Heart left ventricle (tissue), 16 donors: ENCODE measurements at regions of chr19 and their contacts with region 1.

Region 1: GRCh38 chr19:39125554-39126311 is at the start of gene PAK4:
- DNase-seq: peak; percentile 98
- ATAC-seq: peak; percentile 99 to 100 (median 100)
- H3K4me3 ChIP-seq: peak within 1 kb of the TSS; percentile 55 to 88 (median 78)
- H3K27ac ChIP-seq: peak within 1 kb of the TSS; percentile 41 to 86 (median 78)
- H3K4me1 ChIP-seq: peaks cover 0 to 59% (median 35%) of the 10 kb centered on the region in 12 donors
- H3K27me3 ChIP-seq: peaks cover 0 to 11% (median 0%) of the 10 kb centered on the region in 9 donors
- CTCF ChIP-seq: no peak
- POLR2A ChIP-seq: peak in 1 of 2 donors; percentile 61
- total RNA-seq, gene PAK4: 11.5 to 22.1 (median 16.2) TPM

Region 2: GRCh38 chr19:38618590-38619360 is 507.0 kb before region 1 on chr19 and contains the start of gene EIF3K:
- intact Hi-C with region 1: loop called in 1 of 10 experiments (anchors 10 kb)
- DNase-seq: peak; percentile 98 to 100 (median 99)
- ATAC-seq: peak; percentile 93 to 97 (median 95)
- H3K4me3 ChIP-seq: peak within 1 kb of the TSS; percentile 54 to 98 (median 84)
- H3K27ac ChIP-seq: peak within 1 kb of the TSS; percentile 81 to 96 (median 90)
- H3K4me1 ChIP-seq: peaks cover 2 to 28% (median 20%) of the 10 kb centered on the region in 12 donors
- H3K27me3 ChIP-seq: no peaks in the 10 kb centered on the region
- CTCF ChIP-seq: no peak
- POLR2A ChIP-seq: peak; percentile 51 to 80
- total RNA-seq, gene EIF3K: 447 to 1,239 (median 596) TPM

Region 3: DNA sequence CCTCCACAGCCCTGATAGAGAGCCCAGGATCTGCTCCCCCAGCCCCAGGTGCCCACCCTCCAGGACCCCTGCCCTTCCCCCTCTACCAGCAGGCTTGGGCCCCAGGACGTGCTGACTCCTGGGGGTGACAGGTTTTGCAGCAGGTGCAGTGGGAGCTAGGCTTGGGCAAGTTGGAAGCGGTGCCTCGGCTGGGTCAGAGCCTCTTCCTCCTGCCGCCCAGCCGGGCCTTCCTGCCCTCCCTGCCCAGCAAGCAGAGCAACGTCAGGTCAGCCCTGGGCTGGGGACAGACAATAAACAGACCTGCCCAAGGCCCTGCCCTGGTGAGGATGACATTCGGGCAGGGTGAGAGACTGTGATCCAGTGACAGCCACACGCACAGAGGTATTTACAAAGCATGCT is 61.8 kb after region 1 on chr19:
- intact Hi-C with region 1: loop called (anchors 1 to 10 kb)
- DNase-seq: no peak
- ATAC-seq: peak in 3 of 4 donors; percentile 43 to 68 (median 65)
- H3K4me3 ChIP-seq: no peak overlapping the region
- H3K27ac ChIP-seq: no peak overlapping the region
- H3K4me1 ChIP-seq: peaks cover 0 to 5% (median 0%) of the 10 kb centered on the region in 12 donors
- H3K27me3 ChIP-seq: peaks cover 0 to 28% (median 7%) of the 10 kb centered on the region in 9 donors
- CTCF ChIP-seq: no peak
- POLR2A ChIP-seq: no peak

Region 4: GRCh38 chr19:39341719-39342604 is 216.2 kb after region 1 on chr19 and contains the start of gene SAMD4B:
- intact Hi-C with region 1: loop called in 1 of 10 experiments (anchors 5 kb)
- DNase-seq: peak; percentile 99 to 100 (median 99)
- ATAC-seq: peak; percentile 96 to 97 (median 97)
- H3K4me3 ChIP-seq: peak within 1 kb of the TSS; percentile 71 to 96 (median 86)
- H3K27ac ChIP-seq: peak within 1 kb of the TSS in 11 of 12 donors; percentile 80 to 93 (median 90)
- H3K4me1 ChIP-seq: peaks cover 0 to 58% (median 31%) of the 10 kb centered on the region in 12 donors
- H3K27me3 ChIP-seq: no peaks in the 10 kb centered on the region
- CTCF ChIP-seq: peak; percentile 75 to 97 (median 88)
- POLR2A ChIP-seq: peak; percentile 25 to 90
- total RNA-seq, gene SAMD4B: 34.9 to 101 (median 52.3) TPM

Region 5: DNA sequence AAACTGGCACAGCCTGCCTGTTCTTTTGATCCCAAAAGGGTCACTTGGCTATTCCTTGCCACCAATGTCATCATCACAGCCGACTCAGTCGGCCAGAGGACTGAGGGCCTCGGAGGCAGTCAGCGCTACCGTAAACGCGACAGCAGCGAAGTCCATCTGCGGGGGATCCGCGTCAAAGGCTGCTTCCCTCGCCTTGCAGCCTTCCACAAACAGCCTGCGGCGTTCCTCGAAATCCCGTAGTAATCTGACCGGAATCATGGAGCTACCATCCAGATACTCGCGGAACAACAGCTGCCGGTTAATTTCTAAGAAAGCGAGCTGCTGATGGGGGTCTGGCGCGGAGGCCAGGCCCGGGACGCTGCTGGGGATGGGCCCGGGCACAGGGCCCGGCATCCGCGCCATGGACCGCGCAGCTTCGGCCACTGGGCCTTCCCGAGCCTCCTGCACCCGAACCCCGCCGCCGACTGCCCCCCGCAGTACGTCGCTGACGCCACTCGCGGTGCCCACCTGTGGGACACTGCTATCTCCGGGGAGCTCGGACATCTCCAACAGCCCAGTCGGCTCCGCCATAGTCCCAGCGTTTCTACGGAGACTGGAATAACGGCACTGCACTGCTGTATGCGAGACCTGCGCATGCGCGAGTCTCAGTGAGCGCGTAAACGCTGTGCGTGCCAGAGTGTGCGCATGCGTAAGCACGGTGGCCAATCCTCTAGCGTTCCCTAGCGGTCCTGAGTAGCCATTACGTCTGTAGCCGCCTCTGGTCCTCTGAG is 406.7 kb after region 1 on chr19 and contains the start of gene EID2B:
- intact Hi-C with region 1: loop called in 4 of 10 experiments (anchors 10 kb)
- DNase-seq: peak; percentile 95 to 98 (median 97)
- ATAC-seq: peak; percentile 93 to 99 (median 98)
- H3K4me3 ChIP-seq: peak within 1 kb of the TSS; percentile 58 to 98 (median 80)
- H3K27ac ChIP-seq: peak within 1 kb of the TSS; percentile 45 to 92 (median 82)
- H3K4me1 ChIP-seq: peaks cover 0 to 22% (median 13%) of the 10 kb centered on the region in 12 donors
- H3K27me3 ChIP-seq: no peaks in the 10 kb centered on the region
- CTCF ChIP-seq: peak; percentile 96 to 99 (median 98)
- POLR2A ChIP-seq: peak in 1 of 2 donors; percentile 78
- total RNA-seq, gene EID2B: 1.1 to 5.1 (median 2.9) TPM

Region 6: DNA sequence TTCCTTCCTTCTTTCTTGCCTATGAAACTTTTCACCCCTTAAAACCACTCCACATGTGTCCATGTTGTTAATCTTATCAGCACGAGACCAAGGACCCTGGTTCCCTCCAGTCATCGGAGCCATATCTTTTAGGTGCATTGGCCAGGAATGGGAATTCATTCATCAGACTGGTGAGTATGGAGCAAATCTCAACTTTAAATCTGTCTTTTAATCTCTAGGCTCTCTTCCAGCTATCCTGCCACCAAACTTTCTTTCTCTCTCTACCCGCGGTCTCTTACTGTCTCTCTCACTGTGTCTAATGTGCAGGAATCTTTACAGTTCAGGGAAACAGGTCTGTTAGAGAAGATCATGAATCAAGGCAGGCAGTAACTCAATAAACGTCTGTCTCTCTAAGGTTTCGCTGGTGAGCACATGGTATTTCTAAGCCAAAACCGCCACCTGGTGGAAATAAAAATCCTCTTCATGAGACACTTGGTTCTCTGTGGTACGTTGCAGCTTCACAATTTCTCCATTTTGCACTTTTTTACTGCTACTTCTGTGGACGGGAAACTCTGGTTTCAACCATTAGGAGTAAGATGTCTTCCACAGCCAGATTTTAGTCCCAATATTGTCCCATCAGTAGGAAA is 546.1 kb after region 1 on chr19:
- intact Hi-C with region 1: loop called in 1 of 10 experiments (anchors 5 kb)
- DNase-seq: no peak
- ATAC-seq: peak in 3 of 4 donors; percentile 57 to 62 (median 61)
- H3K4me3 ChIP-seq: no peak overlapping the region
- H3K27ac ChIP-seq: no peak overlapping the region
- H3K4me1 ChIP-seq: no peaks in the 10 kb centered on the region
- H3K27me3 ChIP-seq: peaks cover 0 to 8% (median 0%) of the 10 kb centered on the region in 9 donors
- CTCF ChIP-seq: peak; percentile 21 to 58 (median 46)
- POLR2A ChIP-seq: no peak